ENCODE measurements at regions of chr11 and their contacts with region 1.

Region 1: GRCh38 chr11:58524232-58525036 is 16.5 kb upstream of the OR5B21 start:
- DNase-seq: peak; percentile 62 to 90
- H3K4me3 ChIP-seq: no peak overlapping the region
- CTCF ChIP-seq: peak in 1 of 3 donors; percentile 16
- POLR2A ChIP-seq: no peak

Region 2: GRCh38 chr11:57657194-57658022 is 867.0 kb before region 1 on chr11 and contains the start of gene CLP1:
- intact Hi-C with region 1: loop called (anchors 5 kb)
- DNase-seq: peak; percentile 100
- H3K4me3 ChIP-seq: peak within 1 kb of the TSS; percentile 48
- CTCF ChIP-seq: no peak
- POLR2A ChIP-seq: no peak
- total RNA-seq, gene CLP1: 14.0 to 29.2 (median 17.6) TPM

Region 3: DNA sequence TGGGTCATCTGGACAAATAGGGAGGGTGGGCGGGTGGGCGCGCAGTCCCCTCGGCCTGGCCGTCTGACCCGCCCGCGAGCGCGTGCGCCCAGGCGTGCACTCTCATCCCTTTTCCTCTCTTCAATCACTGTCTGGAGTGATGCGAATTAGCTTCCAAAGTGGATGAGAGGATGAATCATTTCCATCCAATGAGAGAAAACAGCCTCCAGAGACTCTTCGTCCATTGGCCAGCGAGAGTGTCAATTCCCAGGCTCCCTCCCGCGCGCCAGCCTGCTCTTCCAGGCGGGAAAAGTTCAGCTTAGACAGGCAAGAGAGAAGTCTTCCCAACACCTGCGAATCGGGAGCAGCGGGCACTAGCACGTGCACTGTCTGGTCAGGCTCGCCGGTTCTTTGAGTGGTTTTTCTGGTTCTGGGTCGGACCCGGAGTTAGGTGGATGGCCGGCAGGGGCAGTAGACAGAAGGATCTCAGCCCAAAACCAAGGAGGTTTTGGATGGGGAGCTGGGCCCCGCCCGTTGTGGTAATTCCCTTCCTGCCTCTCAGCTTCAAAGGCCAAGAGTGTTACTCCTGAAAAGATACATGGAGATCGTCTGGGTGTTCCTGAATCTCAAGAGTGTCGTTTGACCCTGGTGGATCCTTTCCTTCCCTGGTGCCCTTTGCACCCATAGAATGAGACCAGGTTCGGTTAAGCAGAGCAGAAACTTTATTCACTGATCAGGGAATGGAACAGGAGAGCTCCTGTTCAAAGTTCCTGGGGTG is 381.5 kb after region 1 on chr11:
- intact Hi-C with region 1: no loop called
- DNase-seq: peak; percentile 45 to 87
- H3K4me3 ChIP-seq: no peak overlapping the region
- CTCF ChIP-seq: no peak
- POLR2A ChIP-seq: no peak

Measured in lower leg skin (tissue), 4 donors.